Posterior cingulate gyrus (tissue), 11 donors: ENCODE measurements at regions of chr1 and their contacts with region 1.

Region 1: DNA sequence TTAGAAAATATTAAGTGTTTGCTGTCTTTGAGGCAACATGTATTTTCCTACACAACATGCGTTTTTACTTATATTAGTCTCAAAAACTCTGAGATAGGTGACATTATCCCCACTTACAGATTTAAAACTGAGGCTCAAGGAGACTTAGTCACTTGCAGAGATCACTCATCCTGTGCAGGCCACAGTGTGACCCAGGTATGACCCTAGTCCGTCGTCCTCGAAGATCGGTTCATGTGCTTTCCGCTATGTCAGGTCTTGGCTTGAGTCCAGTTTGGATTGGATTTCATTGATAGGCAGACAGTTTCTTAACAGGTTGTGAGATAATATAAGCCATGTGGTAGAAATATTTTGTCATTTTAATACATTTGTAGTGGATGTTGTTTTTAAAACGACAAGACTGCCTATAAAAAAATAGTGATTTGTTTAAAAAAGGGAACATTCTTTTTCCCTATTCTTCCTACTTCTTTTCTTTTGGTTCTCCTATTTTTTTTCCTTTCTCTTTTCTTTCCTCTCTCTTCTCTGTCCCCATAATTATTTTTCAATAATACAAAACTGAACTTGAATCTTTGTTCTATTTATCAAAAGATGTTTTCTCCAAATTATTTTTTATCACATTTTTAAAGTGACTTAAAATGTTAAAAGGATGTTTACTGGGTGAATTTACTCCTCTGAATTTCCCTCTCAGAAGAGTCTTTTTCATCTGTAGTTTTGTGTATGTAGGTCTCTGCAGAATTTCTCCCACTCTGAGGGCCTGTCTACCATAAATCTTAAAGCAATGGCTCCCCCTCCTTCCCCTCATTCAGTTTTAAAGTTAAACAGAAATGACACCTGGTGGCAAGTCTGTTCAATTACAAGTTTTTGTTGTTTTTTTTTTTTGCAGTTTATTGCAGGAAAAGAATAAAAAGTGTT is 81.8 kb downstream of the PHTF1 start:
- DNase-seq: no peak

Region 2: DNA sequence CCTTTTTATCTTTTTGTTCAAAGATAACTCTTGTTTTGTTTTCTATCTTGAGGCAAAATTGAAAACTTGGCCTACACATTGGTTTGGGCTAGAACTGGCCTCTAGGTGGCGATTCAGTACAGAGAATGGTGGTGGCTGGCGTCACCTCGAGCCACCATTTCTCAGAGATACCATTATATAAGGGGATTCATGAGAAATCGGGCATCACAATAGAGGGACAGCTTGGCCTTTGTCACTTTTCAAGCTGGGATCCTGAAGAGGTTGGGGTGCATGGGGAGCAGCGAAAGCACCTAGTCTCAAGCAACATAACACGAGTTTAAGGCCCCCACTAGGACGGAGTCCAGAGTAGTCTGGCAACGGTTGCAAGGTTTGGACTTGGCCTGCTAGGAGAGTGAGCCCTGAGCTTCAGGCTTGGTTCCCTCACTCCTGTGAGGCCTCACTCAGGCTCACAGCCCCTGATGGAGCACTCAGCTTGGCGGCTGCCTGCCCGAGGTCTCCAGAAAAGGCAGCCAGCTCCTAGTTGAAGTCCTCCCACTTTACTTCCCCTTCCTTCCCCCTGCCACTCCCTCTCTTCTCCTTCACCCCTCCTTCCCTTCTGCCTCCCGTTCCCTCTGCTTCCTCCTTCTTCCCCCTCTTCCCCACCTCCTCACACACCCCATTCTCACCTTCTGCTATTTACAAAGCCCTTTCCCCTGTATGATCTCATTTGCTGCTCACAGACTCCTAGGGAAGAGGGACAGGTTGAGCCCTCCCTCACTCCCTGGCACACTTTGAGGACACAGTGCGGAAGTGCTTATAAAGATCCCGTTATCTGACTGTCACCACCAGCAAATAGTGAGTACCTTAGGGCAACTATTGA is 536.7 kb before region 1 on chr1:
- intact Hi-C with region 1: loop called (anchors 2 kb)
- DNase-seq: peak; percentile 13 to 91 (median 62)

Region 3: GRCh38 chr1:113389953-113390834 is 287.3 kb before region 1 on chr1 and contains the start of gene MAGI3:
- intact Hi-C with region 1: loop called (anchors 10 kb)
- DNase-seq: peak; percentile 93 to 99 (median 97)

Region 4: GRCh38 chr1:113456967-113457366 is 220.5 kb before region 1 on chr1:
- intact Hi-C with region 1: no loop called
- DNase-seq: no peak

Region 5: DNA sequence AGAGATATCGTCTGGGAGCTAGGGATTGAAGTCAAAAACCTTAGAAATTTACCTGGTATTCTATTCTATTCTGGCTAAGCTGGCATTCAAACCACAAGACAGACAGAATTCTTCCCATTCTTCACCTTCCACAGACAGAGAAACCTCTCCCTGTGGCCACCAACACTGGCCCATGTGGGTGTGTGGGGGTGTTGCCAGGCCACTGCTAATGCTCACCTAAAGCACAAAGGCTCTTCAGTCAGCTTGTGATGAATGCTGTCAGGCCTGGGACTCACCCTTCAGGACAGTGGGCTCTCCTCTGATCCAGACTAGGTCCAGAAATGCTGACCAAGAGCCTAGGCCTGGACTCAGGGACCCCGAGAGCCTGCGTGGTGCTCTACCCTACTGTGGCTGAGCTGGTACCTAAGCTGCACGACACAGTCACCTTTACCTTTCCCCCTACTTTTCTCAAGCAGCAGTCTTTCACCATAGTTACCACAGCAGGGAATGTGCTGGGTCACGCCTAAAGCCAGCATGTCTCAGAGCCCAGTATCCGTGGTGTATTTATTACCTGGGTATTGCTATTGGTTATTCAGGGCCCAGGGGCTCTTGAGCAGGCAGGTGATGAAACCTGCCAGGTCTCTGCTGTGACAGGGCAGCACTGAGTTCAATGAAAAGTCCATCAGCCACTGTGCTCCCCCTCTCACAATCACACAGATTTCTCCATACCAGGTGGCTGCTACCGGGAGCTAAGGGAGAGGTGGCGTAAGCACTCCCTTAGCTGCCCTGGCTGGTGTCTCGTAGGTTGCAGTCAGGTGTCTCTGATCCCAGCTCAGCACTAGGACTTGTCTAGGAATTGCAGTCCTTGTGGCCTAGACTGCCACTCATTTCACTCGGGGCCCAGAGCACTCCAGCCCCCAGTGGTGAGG is 47.2 kb before region 1 on chr1:
- intact Hi-C with region 1: no loop called
- DNase-seq: no peak